Endothelial cell of umbilical vein (primary cell): ENCODE measurements at regions of chr12 and their contacts with region 1.

Region 1: GRCh38 chr12:41277116-41277945 is 89.2 kb downstream of the PDZRN4 start:
- DNase-seq: peak; percentile 41
- H3K4me3 ChIP-seq: no peak overlapping the region
- H3K27ac ChIP-seq: no peak overlapping the region
- H3K4me1 ChIP-seq: no peaks in the 10 kb centered on the region
- H3K27me3 ChIP-seq: peaks cover 0 to 3% of the 10 kb centered on the region in 2 experiments
- CTCF ChIP-seq: peak; percentile 41 to 46
- POLR2A ChIP-seq: no peak

Region 2: GRCh38 chr12:41264281-41264680 is 13.1 kb before region 1 on chr12:
- CTCF ChIA-PET with region 1: interaction called, 13 read pairs
- POLR2A ChIA-PET with region 1: no interaction called
- dilution Hi-C with region 1: no loop called
- intact Hi-C with region 1: no loop called
- DNase-seq: peak; percentile 16
- H3K4me3 ChIP-seq: no peak overlapping the region
- H3K27ac ChIP-seq: no peak overlapping the region
- H3K4me1 ChIP-seq: no peaks in the 10 kb centered on the region
- H3K27me3 ChIP-seq: no peaks in the 10 kb centered on the region
- CTCF ChIP-seq: peak; percentile 13 to 16
- POLR2A ChIP-seq: no peak

Region 3: GRCh38 chr12:41663598-41664258 is 386.4 kb after region 1 on chr12:
- CTCF ChIA-PET with region 1: interaction called, 60 read pairs
- POLR2A ChIA-PET with region 1: no interaction called
- dilution Hi-C with region 1: no loop called
- intact Hi-C with region 1: loop called (anchors 1 kb)
- DNase-seq: peak; percentile 50
- H3K4me3 ChIP-seq: no peak overlapping the region
- H3K27ac ChIP-seq: no peak overlapping the region
- H3K4me1 ChIP-seq: no peaks in the 10 kb centered on the region
- H3K27me3 ChIP-seq: no peaks in the 10 kb centered on the region
- CTCF ChIP-seq: peak; percentile 35 to 43
- POLR2A ChIP-seq: no peak

Region 4: DNA sequence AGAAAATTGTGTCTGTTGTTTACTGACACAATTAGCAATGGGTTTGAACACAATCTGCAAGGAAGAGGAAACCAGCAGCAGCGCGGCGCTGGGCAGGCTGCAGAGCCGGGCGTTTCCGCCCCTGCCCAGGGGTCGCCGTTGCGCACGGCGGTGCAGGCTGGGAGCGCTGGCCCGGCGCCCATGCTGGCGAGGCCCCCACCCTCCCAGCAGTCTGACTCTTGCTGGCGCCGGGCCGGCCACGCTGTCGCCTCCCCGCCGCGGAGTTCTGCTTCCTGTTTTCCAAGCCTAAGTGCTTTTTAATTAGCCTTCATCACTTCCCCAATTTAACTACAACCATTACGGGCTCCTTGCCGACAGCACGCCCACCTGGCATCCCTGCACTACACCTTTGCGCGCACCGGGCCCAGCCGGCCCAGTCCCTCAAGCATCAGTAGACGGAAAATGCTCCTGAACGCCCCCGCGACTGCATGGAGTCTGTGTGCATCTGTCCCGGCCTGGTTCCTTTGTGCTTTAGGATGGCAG is 655.2 kb after region 1 on chr12:
- CTCF ChIA-PET with region 1: interaction called, 3 read pairs
- POLR2A ChIA-PET with region 1: no interaction called
- dilution Hi-C with region 1: no loop called
- intact Hi-C with region 1: loop called (anchors 10 kb)
- DNase-seq: peak; percentile 90
- H3K4me3 ChIP-seq: peak overlapping the region; percentile 25 to 46 (median 26)
- H3K27ac ChIP-seq: peak overlapping the region; percentile 61
- H3K4me1 ChIP-seq: peaks cover 13% of the 10 kb centered on the region
- H3K27me3 ChIP-seq: no peaks in the 10 kb centered on the region
- CTCF ChIP-seq: no peak
- POLR2A ChIP-seq: no peak

Region 5: GRCh38 chr12:42332301-42333285 is 1055.3 kb after region 1 on chr12:
- CTCF ChIA-PET with region 1: interaction called, 6 read pairs
- POLR2A ChIA-PET with region 1: no interaction called
- dilution Hi-C with region 1: no loop called
- intact Hi-C with region 1: loop called (anchors 2 kb)
- DNase-seq: peak; percentile 67
- H3K4me3 ChIP-seq: no peak overlapping the region
- H3K27ac ChIP-seq: no peak overlapping the region
- H3K4me1 ChIP-seq: peaks cover 6% of the 10 kb centered on the region
- H3K27me3 ChIP-seq: no peaks in the 10 kb centered on the region
- CTCF ChIP-seq: peak; percentile 33 to 53
- POLR2A ChIP-seq: no peak